ENCODE measurements at regions of chr3 and their contacts with region 1.

Region 1: GRCh38 chr3:72818092-72818773 is 30.0 kb downstream of the SHQ1 start:
- DNase-seq: no peak
- ATAC-seq: no peak
- H3K4me3 ChIP-seq: no peak overlapping the region
- H3K27ac ChIP-seq: no peak overlapping the region
- H3K4me1 ChIP-seq: peaks cover 5 to 43% (median 32%) of the 10 kb centered on the region in 9 donors
- H3K27me3 ChIP-seq: no peaks in the 10 kb centered on the region
- CTCF ChIP-seq: peak; percentile 14 to 72 (median 54)

Region 2: GRCh38 chr3:71725279-71725991 is 1092.8 kb before region 1 on chr3 and contains the start of gene EIF4E3:
- intact Hi-C with region 1: loop called in 4 of 10 experiments (anchors 5 to 10 kb)
- DNase-seq: peak in 1 of 2 donors; percentile 46
- ATAC-seq: peak; percentile 40 to 78 (median 64)
- H3K4me3 ChIP-seq: peak within 1 kb of the TSS; percentile 54 to 97 (median 80)
- H3K27ac ChIP-seq: peak within 1 kb of the TSS in 9 of 10 donors; percentile 70 to 92 (median 76)
- H3K4me1 ChIP-seq: peaks cover 3 to 66% (median 19%) of the 10 kb centered on the region in 9 donors
- H3K27me3 ChIP-seq: no peaks in the 10 kb centered on the region
- CTCF ChIP-seq: no peak
- total RNA-seq, gene EIF4E3: 44.8 to 58.1 (median 53.0) TPM

Region 3: GRCh38 chr3:71875461-71875947 is 942.7 kb before region 1 on chr3:
- intact Hi-C with region 1: loop called (anchors 2 to 10 kb)
- DNase-seq: peak; percentile 61 to 72
- ATAC-seq: peak; percentile 83 to 97 (median 90)
- H3K4me3 ChIP-seq: no peak overlapping the region
- H3K27ac ChIP-seq: no peak overlapping the region
- H3K4me1 ChIP-seq: peaks cover 0 to 8% (median 0%) of the 10 kb centered on the region in 9 donors
- H3K27me3 ChIP-seq: peaks cover 0 to 12% (median 2%) of the 10 kb centered on the region in 7 donors
- CTCF ChIP-seq: peak; percentile 67 to 94 (median 88)

Region 4: DNA sequence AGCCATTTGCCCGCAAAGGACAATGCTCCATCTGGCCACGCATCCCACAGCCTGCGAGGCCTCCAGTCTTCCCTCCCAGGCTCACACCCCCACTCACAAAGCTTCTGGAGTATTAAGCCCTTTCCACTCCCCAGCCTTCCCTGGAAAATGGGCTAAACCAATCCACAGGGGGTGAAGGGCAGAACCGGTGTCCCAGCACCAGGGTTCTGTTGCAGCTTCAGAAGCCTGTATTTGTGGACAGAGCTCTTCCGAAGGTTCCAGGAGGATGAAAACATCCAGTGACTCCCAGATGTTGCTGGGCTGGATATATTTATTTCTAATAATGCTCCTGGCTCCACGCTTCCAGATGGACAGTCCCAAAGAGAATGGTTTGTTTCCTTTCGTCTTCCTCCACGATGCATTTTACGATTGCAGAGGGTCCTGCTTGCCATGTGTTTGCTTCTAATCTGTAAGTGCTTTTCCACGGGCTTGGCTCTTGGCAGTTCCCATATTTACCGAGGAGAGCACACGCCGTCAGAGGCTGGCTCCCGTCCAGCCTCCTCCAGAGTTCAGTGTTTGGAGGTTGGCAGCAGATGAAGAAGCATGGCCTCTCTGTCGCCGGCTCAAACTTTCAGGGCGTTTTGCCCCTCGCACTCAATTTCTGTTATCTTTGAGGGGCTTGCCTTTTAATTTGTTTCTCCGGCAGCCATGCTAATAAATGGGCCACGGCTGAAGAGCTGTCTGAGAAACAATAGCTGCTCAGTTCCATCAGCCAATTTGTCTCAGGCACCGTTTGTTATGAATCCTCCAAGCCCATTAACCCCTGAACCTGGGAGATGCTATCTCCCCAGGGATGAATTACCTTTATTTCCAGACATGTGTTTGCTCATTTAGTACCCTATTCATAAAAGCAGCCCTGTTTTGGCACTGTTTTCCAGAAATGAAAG is 665.4 kb before region 1 on chr3:
- intact Hi-C with region 1: loop called in 1 of 10 experiments (anchors 10 kb)
- DNase-seq: peak; percentile 75 to 76
- ATAC-seq: peak; percentile 76 to 91 (median 88)
- H3K4me3 ChIP-seq: peak overlapping the region in 7 of 10 donors; percentile 16 to 38 (median 34)
- H3K27ac ChIP-seq: peak overlapping the region in 7 of 10 donors; percentile 31 to 72 (median 59)
- H3K4me1 ChIP-seq: peaks cover 0 to 38% (median 19%) of the 10 kb centered on the region in 9 donors
- H3K27me3 ChIP-seq: no peaks in the 10 kb centered on the region
- CTCF ChIP-seq: no peak

Region 5: GRCh38 chr3:72270072-72270681 is 548.1 kb before region 1 on chr3:
- intact Hi-C with region 1: loop called in 2 of 10 experiments (anchors 5 to 10 kb)
- DNase-seq: peak; percentile 79 to 87
- ATAC-seq: peak; percentile 88 to 95 (median 92)
- H3K4me3 ChIP-seq: no peak overlapping the region
- H3K27ac ChIP-seq: peak overlapping the region in 7 of 10 donors; percentile 14 to 76 (median 40)
- H3K4me1 ChIP-seq: peaks cover 9 to 62% (median 49%) of the 10 kb centered on the region in 9 donors
- H3K27me3 ChIP-seq: no peaks in the 10 kb centered on the region
- CTCF ChIP-seq: no peak

Region 6: DNA sequence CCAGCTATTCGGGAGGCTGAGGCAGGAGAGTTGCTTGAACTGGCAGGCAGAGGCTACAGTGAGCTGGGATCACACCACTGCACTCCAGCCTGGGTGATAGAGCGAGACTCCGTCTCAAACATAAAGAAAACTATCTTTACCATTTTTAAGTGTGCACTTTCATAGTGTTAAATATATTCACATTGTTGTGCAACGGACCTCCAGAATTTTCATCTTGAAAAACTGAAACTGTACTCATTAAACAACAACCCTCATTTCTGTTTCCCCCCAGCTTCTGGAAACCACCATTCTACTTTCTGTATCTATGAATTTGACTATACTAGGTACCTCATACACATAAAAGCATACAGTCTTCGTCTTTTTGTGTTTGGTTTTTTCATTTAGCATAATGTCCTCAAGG is 345.1 kb before region 1 on chr3:
- intact Hi-C with region 1: no loop called
- DNase-seq: no peak
- ATAC-seq: no peak
- H3K4me3 ChIP-seq: no peak overlapping the region
- H3K27ac ChIP-seq: no peak overlapping the region
- H3K4me1 ChIP-seq: peaks cover 0 to 10% (median 0%) of the 10 kb centered on the region in 9 donors
- H3K27me3 ChIP-seq: no peaks in the 10 kb centered on the region
- CTCF ChIP-seq: no peak

Region 7: DNA sequence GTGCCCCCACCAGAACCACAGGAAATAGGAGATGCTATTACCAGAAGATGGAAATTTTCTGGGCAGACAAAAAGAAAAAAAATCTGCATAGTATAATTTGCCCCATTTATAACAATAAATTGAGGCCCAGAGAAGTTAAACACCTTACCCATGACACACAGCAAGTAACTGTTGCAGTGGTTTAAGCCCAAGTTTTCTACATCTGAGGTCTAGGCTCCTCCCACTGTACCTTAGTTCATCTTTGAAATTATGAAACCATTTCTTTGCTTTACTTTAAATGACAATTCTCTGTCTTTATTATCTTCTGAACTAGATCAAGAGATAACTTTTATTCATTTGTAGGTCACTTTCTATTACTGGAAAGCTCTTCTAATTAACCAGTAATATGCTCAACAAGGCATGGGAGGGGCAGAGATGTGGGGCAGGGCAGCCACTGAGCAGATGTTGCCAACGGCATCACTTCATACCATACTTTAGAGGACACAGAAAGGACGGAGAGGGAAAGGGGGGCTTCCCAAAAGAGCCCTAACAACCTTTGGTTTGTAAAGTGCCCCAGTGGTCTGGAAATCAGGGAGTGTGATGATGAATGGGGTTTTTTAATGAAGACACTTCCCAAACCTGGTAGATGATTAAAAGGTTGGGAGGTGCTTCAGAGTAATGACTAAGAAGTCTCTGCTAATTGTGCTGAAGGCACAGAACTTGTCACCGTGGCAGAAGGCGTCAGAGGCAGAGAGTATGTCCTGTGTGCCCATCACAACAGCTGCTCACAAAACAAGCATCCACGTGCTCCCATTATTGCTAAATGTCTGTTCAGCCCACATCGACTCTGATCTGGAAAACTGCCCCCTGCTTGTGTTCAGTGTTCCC is 312.5 kb before region 1 on chr3:
- intact Hi-C with region 1: no loop called
- DNase-seq: no peak
- ATAC-seq: no peak
- H3K4me3 ChIP-seq: no peak overlapping the region
- H3K27ac ChIP-seq: no peak overlapping the region
- H3K4me1 ChIP-seq: no peaks in the 10 kb centered on the region
- H3K27me3 ChIP-seq: peaks cover 0 to 5% (median 0%) of the 10 kb centered on the region in 7 donors
- CTCF ChIP-seq: no peak

Region 8: GRCh38 chr3:72665701-72666443 is 152.4 kb before region 1 on chr3:
- intact Hi-C with region 1: loop called in 8 of 10 experiments (anchors 5 to 10 kb)
- DNase-seq: peak in 1 of 2 donors; percentile 15
- ATAC-seq: peak in 7 of 8 donors; percentile 23 to 54 (median 46)
- H3K4me3 ChIP-seq: no peak overlapping the region
- H3K27ac ChIP-seq: no peak overlapping the region
- H3K4me1 ChIP-seq: peaks cover 0 to 1% (median under 1%) of the 10 kb centered on the region in 9 donors
- H3K27me3 ChIP-seq: peaks cover 0 to 4% (median 0%) of the 10 kb centered on the region in 7 donors
- CTCF ChIP-seq: peak; percentile 7 to 66 (median 55)